Brain microvascular endothelial cell (primary cell): ENCODE measurements at regions of chr6 and their contacts with region 1.

Region 1: GRCh38 chr6:125956506-125957390 is at the start of gene HINT3:
- DNase-seq: peak; percentile 95
- H3K4me3 ChIP-seq: peak within 1 kb of the TSS; percentile 91
- H3K27ac ChIP-seq: peak within 1 kb of the TSS; percentile 69
- H3K27me3 ChIP-seq: no peaks in the 10 kb centered on the region
- CTCF ChIP-seq: peak; percentile 99

Region 2: GRCh38 chr6:125700581-125701353 is 256.0 kb before region 1 on chr6:
- in situ Hi-C with region 1: no loop called
- DNase-seq: no peak
- H3K4me3 ChIP-seq: no peak overlapping the region
- H3K27ac ChIP-seq: no peak overlapping the region
- H3K27me3 ChIP-seq: no peaks in the 10 kb centered on the region
- CTCF ChIP-seq: no peak

Region 3: DNA sequence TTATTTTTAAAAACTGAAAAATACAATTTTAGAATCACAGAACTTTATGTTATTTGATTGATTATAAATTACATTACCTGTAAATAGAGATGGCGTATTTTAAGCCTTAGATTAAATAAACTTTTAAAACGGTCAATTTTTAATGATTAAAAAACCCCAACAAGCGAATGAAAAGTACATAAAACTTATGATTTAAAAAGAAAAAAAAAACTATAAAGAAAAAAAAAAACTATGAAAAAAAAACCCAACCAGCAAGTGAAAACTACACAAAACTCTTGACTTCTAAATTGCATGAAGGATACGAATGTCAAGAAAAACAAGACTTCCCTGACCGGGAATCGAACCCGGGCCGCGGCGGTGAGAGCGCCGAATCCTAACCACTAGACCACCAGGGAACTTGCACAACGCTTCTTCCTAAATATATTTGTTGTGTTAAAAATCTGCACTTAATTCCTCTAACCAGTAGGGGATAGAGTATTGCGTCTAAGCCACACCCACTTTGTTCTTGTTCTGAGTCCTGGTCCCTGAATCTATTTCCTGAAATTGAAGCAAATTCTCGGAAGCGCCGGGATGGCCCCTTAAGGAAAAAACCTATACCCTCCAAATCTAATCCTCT is 176.7 kb before region 1 on chr6:
- in situ Hi-C with region 1: loop called (anchors 25 kb)
- DNase-seq: peak; percentile 92
- H3K4me3 ChIP-seq: peak overlapping the region; percentile 71
- H3K27ac ChIP-seq: peak overlapping the region; percentile 86
- H3K27me3 ChIP-seq: no peaks in the 10 kb centered on the region
- CTCF ChIP-seq: no peak

Region 4: GRCh38 chr6:126054258-126054702 is 97.5 kb after region 1 on chr6:
- in situ Hi-C with region 1: no loop called
- DNase-seq: peak; percentile 37
- H3K4me3 ChIP-seq: no peak overlapping the region
- H3K27ac ChIP-seq: no peak overlapping the region
- H3K27me3 ChIP-seq: no peaks in the 10 kb centered on the region
- CTCF ChIP-seq: no peak